ENCODE measurements at regions of chr5 and their contacts with region 1.

Region 1: GRCh38 chr5:172106511-172107356 is 81.3 kb downstream of the STK10 start:
- DNase-seq: peak; percentile 79
- ATAC-seq: no peak
- H3K4me3 Mint-ChIP-seq: no peak overlapping the region
- H3K27ac Mint-ChIP-seq: peak overlapping the region; percentile 73
- H3K4me1 Mint-ChIP-seq: peaks cover 61% of the 10 kb centered on the region
- H3K27me3 Mint-ChIP-seq: no peaks in the 10 kb centered on the region

Region 2: GRCh38 chr5:172006321-172007174 is 100.2 kb before region 1 on chr5 and contains the start of gene FBXW11:
- CTCF ChIA-PET with region 1: no interaction called
- POLR2A ChIA-PET with region 1: no interaction called
- intact Hi-C with region 1: loop called in 1 of 2 experiments (anchors 1 kb)
- DNase-seq: peak; percentile 97
- ATAC-seq: peak; percentile 85
- H3K4me3 Mint-ChIP-seq: peak within 1 kb of the TSS; percentile 92
- H3K27ac Mint-ChIP-seq: peak within 1 kb of the TSS; percentile 98
- H3K4me1 Mint-ChIP-seq: peaks cover 43% of the 10 kb centered on the region
- H3K27me3 Mint-ChIP-seq: no peaks in the 10 kb centered on the region
- total RNA-seq, gene FBXW11: 33.8 to 39.5 TPM

Region 3: DNA sequence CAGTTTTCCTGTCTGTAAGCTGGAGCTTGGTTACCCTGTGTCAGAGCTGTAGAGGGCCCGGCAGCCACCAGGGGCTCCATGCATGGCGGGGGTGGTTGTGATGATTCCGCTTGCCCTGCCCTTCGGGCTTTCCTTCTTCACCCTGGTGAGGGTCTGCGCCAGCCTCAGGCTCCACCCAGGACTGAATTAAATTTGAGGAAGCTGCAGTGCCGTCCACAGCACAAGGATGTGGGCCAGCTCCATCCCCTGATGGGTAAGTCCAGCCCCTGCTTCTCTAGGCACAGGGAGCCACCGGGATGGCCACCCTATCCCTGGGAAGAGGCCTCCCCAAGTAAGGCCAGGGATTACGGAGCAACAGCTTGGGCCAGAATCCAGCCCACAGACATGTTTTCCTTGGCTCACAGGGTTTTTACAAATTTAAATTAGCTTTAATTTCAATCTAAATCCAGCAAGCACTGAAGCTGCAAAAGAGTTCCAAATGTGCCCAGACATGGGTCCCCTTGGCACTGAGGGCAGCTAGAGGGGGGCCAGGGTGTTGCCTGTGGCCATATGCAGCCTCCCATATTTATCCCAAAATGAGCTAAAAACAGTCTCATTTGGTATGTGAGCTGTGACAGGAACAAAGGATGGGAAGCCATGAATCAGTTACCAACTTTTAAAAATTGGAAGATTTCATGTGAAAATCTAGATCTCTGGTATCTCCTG is 11.1 kb before region 1 on chr5:
- CTCF ChIA-PET with region 1: interaction called, 18 read pairs
- POLR2A ChIA-PET with region 1: no interaction called
- intact Hi-C with region 1: no loop called
- DNase-seq: no peak
- ATAC-seq: no peak
- H3K4me3 Mint-ChIP-seq: no peak overlapping the region
- H3K27ac Mint-ChIP-seq: no peak overlapping the region
- H3K4me1 Mint-ChIP-seq: peaks cover 3% of the 10 kb centered on the region
- H3K27me3 Mint-ChIP-seq: no peaks in the 10 kb centered on the region

Region 4: GRCh38 chr5:172223901-172224873 is 117.5 kb after region 1 on chr5:
- CTCF ChIA-PET with region 1: no interaction called
- POLR2A ChIA-PET with region 1: no interaction called
- intact Hi-C with region 1: loop called in 1 of 2 experiments (anchors 1 kb)
- DNase-seq: peak; percentile 82
- ATAC-seq: peak; percentile 91
- H3K4me3 Mint-ChIP-seq: peak overlapping the region; percentile 5
- H3K27ac Mint-ChIP-seq: peak overlapping the region; percentile 72
- H3K4me1 Mint-ChIP-seq: peaks cover 38% of the 10 kb centered on the region
- H3K27me3 Mint-ChIP-seq: peaks cover 1% of the 10 kb centered on the region

Region 5: DNA sequence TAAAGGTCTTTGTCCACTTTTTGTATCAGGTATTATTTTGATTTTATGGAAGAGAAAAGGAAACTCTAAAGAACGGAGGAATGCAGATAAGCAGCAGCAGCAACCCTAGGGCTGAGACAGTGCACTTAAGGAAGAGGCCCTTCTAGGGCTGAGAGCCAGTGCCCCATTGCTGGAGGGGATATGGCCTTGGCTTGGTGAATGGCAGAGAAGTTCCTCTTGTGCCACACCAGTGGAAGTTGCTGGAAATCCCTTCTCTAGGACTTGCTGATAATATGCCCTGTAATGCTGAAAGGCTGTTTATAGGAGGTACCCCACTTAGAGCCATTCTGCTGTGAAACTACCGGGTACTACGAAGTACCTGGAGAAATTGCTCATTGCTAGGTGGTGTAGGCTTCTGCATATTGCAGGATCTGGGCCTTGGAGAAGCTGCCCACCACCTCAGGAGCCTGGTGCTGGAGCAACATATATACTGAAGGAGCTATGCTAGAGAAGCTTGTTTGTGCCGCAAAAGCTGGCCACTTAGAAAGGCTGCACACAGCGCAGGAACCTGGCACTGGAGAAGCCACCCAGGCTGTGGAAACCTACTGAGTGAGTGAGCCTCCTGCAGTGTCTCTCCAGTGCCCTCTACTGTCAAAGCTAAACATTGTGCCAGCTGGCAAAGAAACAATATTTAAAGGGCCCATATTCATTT is 186.5 kb after region 1 on chr5:
- CTCF ChIA-PET with region 1: interaction called, 6 read pairs
- POLR2A ChIA-PET with region 1: no interaction called
- intact Hi-C with region 1: loop called (anchors 1 kb)
- DNase-seq: peak; percentile 78
- ATAC-seq: peak; percentile 100
- H3K4me3 Mint-ChIP-seq: no peak overlapping the region
- H3K27ac Mint-ChIP-seq: no peak overlapping the region
- H3K4me1 Mint-ChIP-seq: peaks cover 2% of the 10 kb centered on the region
- H3K27me3 Mint-ChIP-seq: peaks cover 3% of the 10 kb centered on the region

Region 6: DNA sequence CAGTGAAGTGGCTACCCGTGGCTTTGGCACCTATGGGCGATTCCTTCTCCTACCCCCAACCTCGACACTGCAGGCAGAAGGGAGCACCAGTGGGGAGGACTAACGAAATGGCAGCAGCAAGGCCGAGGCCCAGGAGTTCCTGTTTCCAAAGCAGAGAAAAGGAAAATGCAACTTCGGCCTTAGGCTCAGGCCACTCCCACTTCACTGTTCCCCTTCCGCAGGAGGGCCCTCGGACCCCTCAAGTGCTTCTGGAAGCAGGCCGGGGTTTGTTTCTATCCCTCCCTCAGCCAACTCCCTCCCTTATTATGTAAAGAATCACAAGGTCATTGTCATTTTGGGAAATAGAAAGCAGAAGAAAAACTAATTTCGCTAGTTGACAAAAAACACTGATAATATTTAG is 1164.7 kb after region 1 on chr5:
- CTCF ChIA-PET with region 1: no interaction called
- POLR2A ChIA-PET with region 1: no interaction called
- intact Hi-C with region 1: no loop called
- DNase-seq: no peak
- ATAC-seq: no peak
- H3K4me3 Mint-ChIP-seq: no peak overlapping the region
- H3K27ac Mint-ChIP-seq: no peak overlapping the region
- H3K4me1 Mint-ChIP-seq: no peaks in the 10 kb centered on the region
- H3K27me3 Mint-ChIP-seq: peaks cover 29% of the 10 kb centered on the region